Caco-2 (cell line): ENCODE measurements at regions of chr1 and their contacts with region 1.

Region 1: DNA sequence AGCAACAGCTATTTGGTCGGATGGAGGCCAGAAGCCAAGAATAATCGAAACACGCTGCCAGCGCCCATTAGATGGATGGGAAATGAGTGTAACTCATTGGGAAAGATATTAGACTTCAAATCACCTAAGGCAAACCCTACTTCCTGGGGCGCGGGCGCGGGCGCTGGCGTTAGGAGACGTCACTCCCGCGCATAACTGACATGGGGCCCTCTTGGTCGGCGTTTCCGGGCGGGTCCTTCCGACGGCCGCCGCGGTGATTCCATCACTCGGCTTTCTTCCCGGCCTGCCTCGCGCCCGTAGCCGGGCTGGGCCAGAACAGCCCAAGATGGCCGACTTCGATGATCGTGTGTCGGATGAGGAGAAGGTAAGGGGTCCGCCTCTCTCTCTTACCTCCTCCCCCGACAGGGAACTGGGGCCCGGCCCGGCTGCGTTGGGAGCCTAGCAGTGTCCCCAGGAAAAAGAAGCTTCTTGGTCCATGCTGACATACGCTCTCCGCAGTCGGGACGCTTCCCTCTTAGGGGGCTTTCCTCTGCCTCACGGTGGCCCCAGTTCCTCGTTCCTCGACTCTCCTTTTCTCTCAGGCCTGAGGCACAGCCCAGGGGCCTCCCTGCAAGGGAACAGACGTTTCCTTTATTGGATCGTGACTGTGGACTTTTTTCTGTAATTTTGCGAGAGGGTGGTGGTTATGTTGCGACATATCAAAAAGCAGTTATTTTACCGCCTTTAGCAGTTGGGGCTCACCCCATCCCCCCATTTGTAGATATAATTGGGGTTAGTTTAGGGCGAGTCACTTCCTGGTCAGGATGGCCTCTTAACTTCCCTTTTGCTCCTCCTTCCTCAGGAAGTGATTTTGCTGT is at the start of gene CAPZA1:
- DNase-seq: peak; percentile 85 to 86
- H3K4me3 ChIP-seq: peak within 1 kb of the TSS; percentile 95
- H3K4me3 Mint-ChIP-seq: peak within 1 kb of the TSS; percentile 98
- H3K27ac Mint-ChIP-seq: peak within 1 kb of the TSS; percentile 98
- H3K4me1 ChIP-seq: no peaks in the 10 kb centered on the region
- H3K4me1 Mint-ChIP-seq: no peaks in the 10 kb centered on the region
- H3K27me3 ChIP-seq: no peaks in the 10 kb centered on the region
- H3K27me3 Mint-ChIP-seq: no peaks in the 10 kb centered on the region
- CTCF ChIP-seq: no peak
- total RNA-seq, gene CAPZA1: 82.4 and 98.7 TPM in 2 replicates

Region 2: GRCh38 chr1:112501810-112502641 is 117.7 kb before region 1 on chr1:
- CTCF ChIA-PET with region 1: no interaction called
- POLR2A ChIA-PET with region 1: no interaction called
- intact Hi-C with region 1: loop called (anchors 5 kb)
- DNase-seq: peak; percentile 56 to 63
- H3K4me3 ChIP-seq: peak overlapping the region; percentile 40
- H3K4me3 Mint-ChIP-seq: peak overlapping the region; percentile 66
- H3K27ac Mint-ChIP-seq: no peak overlapping the region
- H3K4me1 ChIP-seq: no peaks in the 10 kb centered on the region
- H3K4me1 Mint-ChIP-seq: no peaks in the 10 kb centered on the region
- H3K27me3 ChIP-seq: no peaks in the 10 kb centered on the region
- H3K27me3 Mint-ChIP-seq: peaks cover 4% of the 10 kb centered on the region
- CTCF ChIP-seq: peak; percentile 20 to 33

Region 3: DNA sequence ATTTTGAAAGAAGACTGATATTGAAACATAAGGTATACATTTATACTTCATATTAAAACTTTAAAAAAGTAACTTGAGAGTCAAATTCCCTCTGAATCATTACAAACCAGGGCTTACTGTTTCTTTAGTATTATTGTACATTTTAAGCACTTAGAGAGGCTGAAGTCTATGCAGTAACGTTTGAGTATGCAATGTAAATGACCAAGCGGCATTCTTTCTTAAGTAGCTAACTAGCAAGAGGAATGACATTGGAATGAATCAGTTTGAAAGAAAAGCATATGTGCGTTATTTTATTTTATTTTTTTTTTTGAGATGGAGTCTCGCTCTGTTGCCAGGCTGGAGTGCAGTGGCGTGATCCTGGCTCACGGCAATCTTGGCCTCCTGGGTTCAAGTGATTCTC is 86.7 kb before region 1 on chr1:
- CTCF ChIA-PET with region 1: no interaction called
- POLR2A ChIA-PET with region 1: no interaction called
- intact Hi-C with region 1: no loop called
- DNase-seq: no peak
- H3K4me3 ChIP-seq: no peak overlapping the region
- H3K4me3 Mint-ChIP-seq: no peak overlapping the region
- H3K27ac Mint-ChIP-seq: no peak overlapping the region
- H3K4me1 ChIP-seq: no peaks in the 10 kb centered on the region
- H3K4me1 Mint-ChIP-seq: no peaks in the 10 kb centered on the region
- H3K27me3 ChIP-seq: no peaks in the 10 kb centered on the region
- H3K27me3 Mint-ChIP-seq: no peaks in the 10 kb centered on the region
- CTCF ChIP-seq: no peak

Region 4: DNA sequence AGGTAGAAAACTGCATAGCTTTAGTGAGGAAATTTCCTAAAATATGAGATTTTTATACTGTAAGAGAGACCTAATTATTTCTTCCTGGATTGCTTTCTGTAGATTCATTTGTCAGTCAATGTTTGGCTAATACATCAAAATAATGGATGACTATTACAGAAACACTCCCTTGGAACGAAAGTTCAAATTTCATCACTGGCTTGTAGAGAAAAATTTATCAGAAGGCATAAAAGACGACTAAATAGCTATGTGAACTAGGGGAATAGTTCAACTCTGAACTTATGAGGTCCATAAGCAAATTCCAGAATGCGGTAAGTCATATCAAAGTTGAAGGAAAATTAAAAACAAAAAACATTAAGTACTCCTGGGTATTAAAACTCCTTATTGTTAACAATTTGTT is 75.0 kb before region 1 on chr1:
- CTCF ChIA-PET with region 1: no interaction called
- POLR2A ChIA-PET with region 1: no interaction called
- intact Hi-C with region 1: no loop called
- DNase-seq: no peak
- H3K4me3 ChIP-seq: no peak overlapping the region
- H3K4me3 Mint-ChIP-seq: no peak overlapping the region
- H3K27ac Mint-ChIP-seq: no peak overlapping the region
- H3K4me1 ChIP-seq: peaks cover 4% of the 10 kb centered on the region; the same call in 1 of the 2 replicates
- H3K4me1 Mint-ChIP-seq: no peaks in the 10 kb centered on the region
- H3K27me3 ChIP-seq: no peaks in the 10 kb centered on the region
- H3K27me3 Mint-ChIP-seq: no peaks in the 10 kb centered on the region
- CTCF ChIP-seq: no peak

Region 5: GRCh38 chr1:112605633-112606327 is 14.0 kb before region 1 on chr1:
- CTCF ChIA-PET with region 1: no interaction called
- POLR2A ChIA-PET with region 1: no interaction called
- intact Hi-C with region 1: loop called (anchors 1 kb)
- DNase-seq: no peak
- H3K4me3 ChIP-seq: no peak overlapping the region
- H3K4me3 Mint-ChIP-seq: no peak overlapping the region
- H3K27ac Mint-ChIP-seq: no peak overlapping the region
- H3K4me1 ChIP-seq: no peaks in the 10 kb centered on the region
- H3K4me1 Mint-ChIP-seq: no peaks in the 10 kb centered on the region
- H3K27me3 ChIP-seq: no peaks in the 10 kb centered on the region
- H3K27me3 Mint-ChIP-seq: no peaks in the 10 kb centered on the region
- CTCF ChIP-seq: no peak

Region 6: DNA sequence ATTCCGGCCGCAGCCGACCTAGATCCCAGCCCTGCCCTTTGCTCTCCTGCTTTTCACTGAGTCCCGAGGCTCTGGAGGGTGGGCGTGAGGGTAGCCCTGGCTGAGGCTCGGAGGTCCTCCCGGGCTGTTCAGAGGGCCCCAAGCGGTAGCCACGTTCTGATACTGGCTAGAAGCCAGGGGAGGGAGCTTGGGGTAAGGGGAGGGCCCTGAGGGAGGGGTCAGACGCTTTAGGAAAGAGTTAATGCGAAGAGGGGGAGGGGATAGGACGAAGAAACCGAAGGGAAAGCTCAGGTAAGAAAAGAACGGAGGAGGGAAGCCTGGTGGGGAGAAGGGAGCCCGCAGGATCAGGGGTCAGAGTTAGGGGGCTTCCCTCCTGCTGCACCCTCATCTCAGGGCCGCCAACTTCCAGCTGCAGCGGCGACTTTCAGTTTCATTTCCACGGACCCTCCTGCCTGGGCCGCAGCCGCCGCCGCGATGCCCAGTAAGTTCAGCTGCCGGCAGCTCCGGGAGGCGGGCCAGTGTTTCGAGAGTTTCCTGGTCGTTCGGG is 54.8 kb after region 1 on chr1 and contains the start of gene MOV10:
- CTCF ChIA-PET with region 1: no interaction called
- POLR2A ChIA-PET with region 1: no interaction called
- intact Hi-C with region 1: loop called (anchors 5 kb)
- DNase-seq: peak; percentile 68 to 75
- H3K4me3 ChIP-seq: peak within 1 kb of the TSS; percentile 53
- H3K4me3 Mint-ChIP-seq: peak within 1 kb of the TSS; percentile 88
- H3K27ac Mint-ChIP-seq: peak within 1 kb of the TSS; percentile 98
- H3K4me1 ChIP-seq: peaks cover 14% of the 10 kb centered on the region
- H3K4me1 Mint-ChIP-seq: peaks cover 13% of the 10 kb centered on the region
- H3K27me3 ChIP-seq: no peaks in the 10 kb centered on the region
- H3K27me3 Mint-ChIP-seq: no peaks in the 10 kb centered on the region
- CTCF ChIP-seq: no peak
- total RNA-seq, gene MOV10: 89.8 and 102 TPM in 2 replicates

Region 7: GRCh38 chr1:112706908-112707663 is 87.3 kb after region 1 on chr1 and contains the start of gene RHOC:
- CTCF ChIA-PET with region 1: interaction called, 3 read pairs
- POLR2A ChIA-PET with region 1: no interaction called
- intact Hi-C with region 1: loop called (anchors 2 kb)
- DNase-seq: peak; percentile 89
- H3K4me3 ChIP-seq: peak within 1 kb of the TSS; percentile 84
- H3K4me3 Mint-ChIP-seq: peak within 1 kb of the TSS; percentile 88
- H3K27ac Mint-ChIP-seq: peak within 1 kb of the TSS; percentile 69
- H3K4me1 ChIP-seq: peaks cover 29% of the 10 kb centered on the region
- H3K4me1 Mint-ChIP-seq: peaks cover 11% of the 10 kb centered on the region
- H3K27me3 ChIP-seq: no peaks in the 10 kb centered on the region
- H3K27me3 Mint-ChIP-seq: no peaks in the 10 kb centered on the region
- CTCF ChIP-seq: peak; percentile 74 to 82
- total RNA-seq, gene RHOC: 128 and 134 TPM in 2 replicates